ENCODE measurements at regions of chr12 and their contacts with region 1.

Region 1: DNA sequence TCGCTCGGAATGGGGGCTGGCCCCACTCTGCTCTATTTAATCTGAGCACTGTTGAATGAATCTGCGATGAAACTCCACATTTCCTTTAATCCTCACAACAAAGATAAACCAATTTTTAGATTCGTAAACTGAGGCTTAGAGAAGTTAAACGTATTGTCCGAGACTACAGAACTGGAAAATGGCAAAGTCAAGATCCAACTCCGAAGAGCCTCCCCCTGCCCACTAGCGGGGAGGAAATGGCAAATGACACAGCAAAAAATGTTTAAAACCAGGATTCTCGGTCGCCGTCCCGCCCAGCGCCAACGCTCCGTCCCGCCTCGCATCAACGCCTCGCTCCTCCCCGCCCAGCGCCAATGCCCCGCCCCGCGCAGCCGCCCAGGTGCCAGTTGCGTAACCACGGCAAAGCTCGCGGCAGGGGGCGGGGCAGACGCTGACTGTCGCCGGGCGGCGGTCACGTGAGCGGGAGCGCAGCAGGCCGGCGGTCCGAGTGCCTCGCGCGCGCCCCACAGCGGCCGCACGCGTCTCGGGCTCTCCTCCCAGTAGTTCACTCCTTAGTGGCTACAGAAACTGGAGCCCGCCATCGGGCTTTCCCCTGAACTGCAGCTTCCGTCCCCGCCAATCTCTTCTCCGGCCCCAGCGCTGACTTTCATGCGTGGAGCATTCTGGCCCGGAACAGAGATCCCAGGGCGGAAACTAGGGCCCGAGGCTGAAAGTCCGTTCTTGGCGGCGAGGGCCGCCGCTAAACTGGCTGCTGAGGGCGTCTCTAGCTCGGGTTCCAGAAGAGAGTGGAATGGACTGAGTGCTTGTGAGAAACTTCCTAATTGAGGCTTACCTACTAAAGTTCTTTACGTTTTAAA is 13.6 kb upstream of the LRRC23 start:
- DNase-seq: peak; percentile 98
- H3K4me3 Mint-ChIP-seq: peak overlapping the region; percentile 84
- H3K27ac Mint-ChIP-seq: peak overlapping the region; percentile 95
- H3K4me1 Mint-ChIP-seq: peaks cover 19% of the 10 kb centered on the region
- H3K27me3 Mint-ChIP-seq: no peaks in the 10 kb centered on the region

Region 2: DNA sequence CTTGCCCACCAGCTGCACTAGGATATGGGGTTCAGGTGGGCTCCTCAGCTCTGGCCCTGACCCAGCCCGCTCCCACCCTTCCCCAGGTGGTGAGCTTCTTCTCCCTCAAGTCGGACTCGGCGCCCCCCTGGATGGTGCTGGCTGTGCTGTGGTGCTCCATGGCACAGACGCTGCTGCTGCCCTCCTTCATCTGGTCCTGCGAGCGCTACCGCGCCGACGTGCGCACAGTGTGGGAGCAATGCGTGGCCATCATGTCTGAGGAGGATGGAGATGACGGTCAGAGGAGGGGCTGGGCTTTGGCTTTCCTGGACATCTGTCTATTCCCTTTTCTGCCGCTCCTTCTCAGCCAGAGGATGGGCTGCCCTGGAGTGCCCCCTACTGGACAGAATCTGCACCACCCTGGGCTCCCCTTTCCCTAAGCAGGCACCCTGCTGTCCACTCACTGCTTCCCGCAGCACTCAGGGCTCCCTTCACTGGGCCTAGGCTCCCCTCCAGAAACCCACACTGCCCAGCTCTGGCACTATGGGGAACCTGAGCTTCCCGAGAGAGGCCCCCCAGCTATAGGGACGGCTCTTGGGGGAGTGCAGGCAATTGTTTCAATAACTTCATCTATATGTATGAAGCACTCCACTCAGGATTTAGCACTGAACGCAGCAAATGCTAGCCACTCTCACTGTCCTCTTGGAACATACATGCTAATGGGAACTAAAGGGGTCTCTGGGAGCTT is 65.5 kb before region 1 on chr12:
- intact Hi-C with region 1: no loop called
- DNase-seq: peak; percentile 72
- H3K4me3 Mint-ChIP-seq: peak overlapping the region; percentile 40
- H3K27ac Mint-ChIP-seq: peak overlapping the region; percentile 59
- H3K4me1 Mint-ChIP-seq: peaks cover 46% of the 10 kb centered on the region
- H3K27me3 Mint-ChIP-seq: peaks cover 46% of the 10 kb centered on the region

Region 3: DNA sequence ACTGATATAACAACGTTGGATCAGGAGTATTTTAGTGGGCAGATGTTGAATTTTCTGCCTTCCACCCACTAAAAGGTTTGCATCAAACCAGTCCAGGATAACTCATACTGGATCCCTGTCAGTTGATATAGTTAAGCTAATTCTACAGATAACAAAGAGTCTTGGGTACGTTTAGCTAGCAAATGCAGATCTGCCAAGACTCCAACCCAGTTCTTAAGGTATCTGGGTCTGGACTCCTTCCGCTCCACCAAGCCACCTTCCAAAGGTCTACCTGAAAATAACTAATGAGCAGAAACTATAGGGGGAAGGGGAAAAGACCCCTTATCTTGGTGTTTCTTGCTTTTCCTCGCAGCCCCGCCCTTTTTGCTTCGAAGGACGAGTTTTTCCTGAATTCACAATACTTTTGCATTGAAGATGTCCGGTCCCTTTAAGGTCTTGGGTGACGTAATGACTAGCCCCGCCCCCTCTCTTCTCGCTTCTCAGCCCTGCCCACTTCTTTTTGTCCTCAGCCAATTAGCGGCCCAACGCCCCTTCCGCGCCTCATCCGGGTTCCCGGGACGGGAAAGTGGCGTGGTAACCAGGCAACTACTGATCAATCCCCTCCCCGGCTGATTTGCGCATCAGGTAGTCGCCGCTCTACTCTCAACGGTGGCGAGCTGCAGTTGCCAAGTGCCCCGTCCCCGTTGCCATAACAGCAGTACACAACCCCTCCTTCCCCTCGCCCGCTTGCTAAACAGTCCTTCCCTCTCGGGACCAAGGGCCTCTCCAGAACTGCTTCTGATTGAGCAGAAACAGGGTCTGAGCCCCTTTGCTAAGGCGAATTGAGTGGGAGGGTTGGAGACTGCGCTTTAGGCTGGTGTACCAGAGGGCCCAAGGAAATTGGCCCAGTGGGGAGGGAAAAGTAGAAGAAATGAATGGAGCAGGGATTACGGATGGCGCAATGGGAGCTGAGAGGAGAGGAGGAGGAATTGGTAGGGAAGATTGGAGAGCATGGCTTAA is 13.6 kb after region 1 on chr12 and contains the start of gene LRRC23:
- intact Hi-C with region 1: loop called (anchors 1 kb)
- DNase-seq: peak; percentile 97
- H3K4me3 Mint-ChIP-seq: no peak within 1 kb of the TSS
- H3K27ac Mint-ChIP-seq: no peak within 1 kb of the TSS
- H3K4me1 Mint-ChIP-seq: peaks cover 8% of the 10 kb centered on the region
- H3K27me3 Mint-ChIP-seq: no peaks in the 10 kb centered on the region
- total RNA-seq, gene LRRC23: 5.3 and 5.6 TPM in 2 replicates

Region 4: DNA sequence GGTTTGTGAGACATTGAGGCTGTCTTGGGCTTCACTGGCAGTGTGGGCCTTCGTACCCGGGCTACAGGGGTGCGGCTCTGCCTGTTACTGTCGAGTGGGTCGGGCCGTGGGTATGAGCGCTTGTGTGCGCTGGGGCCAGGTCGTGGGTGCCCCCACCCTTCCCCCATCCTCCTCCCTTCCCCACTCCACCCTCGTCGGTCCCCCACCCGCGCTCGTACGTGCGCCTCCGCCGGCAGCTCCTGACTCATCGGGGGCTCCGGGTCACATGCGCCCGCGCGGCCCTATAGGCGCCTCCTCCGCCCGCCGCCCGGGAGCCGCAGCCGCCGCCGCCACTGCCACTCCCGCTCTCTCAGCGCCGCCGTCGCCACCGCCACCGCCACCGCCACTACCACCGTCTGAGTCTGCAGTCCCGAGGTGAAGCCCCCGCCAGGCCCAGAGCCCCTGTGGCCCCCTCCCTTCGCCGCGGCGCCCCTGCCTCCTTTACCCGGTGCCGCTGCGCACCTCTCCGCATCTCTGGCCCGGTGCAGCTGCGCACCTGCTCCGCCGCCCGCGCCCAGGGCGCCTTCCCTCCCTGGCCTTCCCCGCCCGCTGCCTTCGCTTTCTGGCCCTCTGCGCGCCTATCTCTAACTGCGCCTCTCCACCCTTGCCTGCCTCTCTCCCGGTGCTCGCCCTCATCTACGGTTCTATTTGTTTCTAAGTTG is 23.4 kb after region 1 on chr12 and contains the start of gene ENO2:
- intact Hi-C with region 1: loop called (anchors 1 kb)
- DNase-seq: peak; percentile 77
- H3K4me3 Mint-ChIP-seq: peak within 1 kb of the TSS; percentile 96
- H3K27ac Mint-ChIP-seq: peak within 1 kb of the TSS; percentile 88
- H3K4me1 Mint-ChIP-seq: peaks cover 52% of the 10 kb centered on the region
- H3K27me3 Mint-ChIP-seq: no peaks in the 10 kb centered on the region
- total RNA-seq, gene ENO2: 147 and 156 TPM in 2 replicates

Region 5: GRCh38 chr12:6944381-6945186 is 53.6 kb after region 1 on chr12:
- intact Hi-C with region 1: loop called (anchors 2 kb)
- DNase-seq: peak; percentile 84
- H3K4me3 Mint-ChIP-seq: peak overlapping the region; percentile 96
- H3K27ac Mint-ChIP-seq: peak overlapping the region; percentile 95
- H3K4me1 Mint-ChIP-seq: peaks cover 71% of the 10 kb centered on the region
- H3K27me3 Mint-ChIP-seq: no peaks in the 10 kb centered on the region

Measured in activated T-helper 1 cell treated with anti-CD3 and anti-CD28 coated beads, Interleukin-12 subunit alpha, Interleukin-12 subunit beta, Interleukin-2, Interleukin-4 antibody, amounts not matched to agents 30 ng/mL and 10 ng/mL and 1 ng/mL, durations not matched to agents 14 hours and 24 hours and 36 hours (primary cell).